Activated B cell treated with CpG ODN at 0.5 μM for 24 hours (primary cell): ENCODE measurements at regions of chr13 and their contacts with region 1.

Region 1: GRCh38 chr13:44141725-44142539 is 231.7 kb upstream of the SERP2 start:
- DNase-seq: peak; percentile 100
- ATAC-seq: peak; percentile 99
- H3K4me3 Mint-ChIP-seq: peak overlapping the region; percentile 93
- H3K27ac Mint-ChIP-seq: peak overlapping the region; percentile 86
- H3K4me1 Mint-ChIP-seq: peaks cover 29% of the 10 kb centered on the region
- H3K27me3 Mint-ChIP-seq: peaks cover 8% of the 10 kb centered on the region
- CTCF ChIP-seq: no peak

Region 2: GRCh38 chr13:44058624-44059215 is 83.2 kb before region 1 on chr13:
- CTCF ChIA-PET with region 1: no interaction called
- POLR2A ChIA-PET with region 1: no interaction called
- intact Hi-C with region 1: no loop called
- DNase-seq: no peak
- ATAC-seq: no peak
- H3K4me3 Mint-ChIP-seq: no peak overlapping the region
- H3K27ac Mint-ChIP-seq: no peak overlapping the region
- H3K4me1 Mint-ChIP-seq: no peaks in the 10 kb centered on the region
- H3K27me3 Mint-ChIP-seq: peaks cover 17% of the 10 kb centered on the region
- CTCF ChIP-seq: no peak

Region 3: GRCh38 chr13:44174769-44175425 is 33.0 kb after region 1 on chr13:
- CTCF ChIA-PET with region 1: no interaction called
- POLR2A ChIA-PET with region 1: no interaction called
- intact Hi-C with region 1: no loop called
- DNase-seq: no peak
- ATAC-seq: no peak
- H3K4me3 Mint-ChIP-seq: no peak overlapping the region
- H3K27ac Mint-ChIP-seq: no peak overlapping the region
- H3K4me1 Mint-ChIP-seq: no peaks in the 10 kb centered on the region
- H3K27me3 Mint-ChIP-seq: peaks cover 3% of the 10 kb centered on the region
- CTCF ChIP-seq: no peak

Region 4: GRCh38 chr13:44259045-44260027 is 117.4 kb after region 1 on chr13:
- CTCF ChIA-PET with region 1: no interaction called
- POLR2A ChIA-PET with region 1: interaction called, 7 read pairs
- intact Hi-C with region 1: loop called (anchors 1 kb)
- DNase-seq: peak; percentile 36
- ATAC-seq: peak; percentile 92
- H3K4me3 Mint-ChIP-seq: peak overlapping the region; percentile 74
- H3K27ac Mint-ChIP-seq: peak overlapping the region; percentile 80
- H3K4me1 Mint-ChIP-seq: peaks cover 19% of the 10 kb centered on the region
- H3K27me3 Mint-ChIP-seq: no peaks in the 10 kb centered on the region
- CTCF ChIP-seq: no peak

Region 5: DNA sequence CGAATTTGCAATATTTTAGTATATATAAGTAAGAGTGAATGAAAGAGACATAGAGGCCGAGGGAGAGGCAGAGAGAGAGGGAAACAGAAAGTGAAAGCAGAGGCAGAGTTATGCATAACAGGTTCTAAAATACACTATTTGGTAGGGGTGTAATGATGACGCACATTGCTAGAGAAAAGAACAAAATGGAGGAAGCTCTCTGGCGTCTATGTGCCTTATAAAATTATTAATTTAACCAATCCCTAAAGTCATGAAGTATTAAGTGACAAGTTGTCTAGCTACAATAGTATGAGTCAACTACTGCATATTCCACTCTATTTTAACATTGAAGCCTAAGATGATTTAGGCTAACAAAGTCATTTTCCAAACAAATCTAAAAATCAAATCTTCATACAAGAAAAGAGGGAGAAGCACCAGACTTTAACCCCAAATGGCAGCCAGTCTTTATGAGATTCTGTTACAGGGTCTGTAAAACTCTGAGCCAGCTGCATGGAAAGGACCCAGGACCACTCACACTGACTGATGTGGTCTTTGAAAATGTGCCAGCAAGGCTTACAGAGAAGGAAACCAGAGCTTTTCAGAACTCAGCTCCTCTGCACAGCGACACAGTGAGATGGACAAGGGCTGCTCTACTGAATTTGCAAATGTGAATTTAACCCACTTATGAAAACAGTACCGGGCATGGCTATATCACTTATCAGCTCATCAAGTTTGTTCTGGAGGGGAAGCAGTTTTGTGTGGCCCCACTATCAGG is 132.7 kb after region 1 on chr13:
- CTCF ChIA-PET with region 1: no interaction called
- POLR2A ChIA-PET with region 1: interaction called, 14 read pairs
- intact Hi-C with region 1: loop called (anchors 1 kb)
- DNase-seq: no peak
- ATAC-seq: peak; percentile 86
- H3K4me3 Mint-ChIP-seq: peak overlapping the region; percentile 56
- H3K27ac Mint-ChIP-seq: peak overlapping the region; percentile 67
- H3K4me1 Mint-ChIP-seq: peaks cover 44% of the 10 kb centered on the region
- H3K27me3 Mint-ChIP-seq: peaks cover 2% of the 10 kb centered on the region
- CTCF ChIP-seq: no peak